Upper lobe of right lung (tissue), 1 donor: ENCODE measurements at regions of chr1 and their contacts with region 1.

Region 1: GRCh38 chr1:89804642-89805237 is 16.1 kb upstream of the LRRC8D start:
- DNase-seq: peak; percentile 73
- ATAC-seq: peak; percentile 97
- H3K4me3 ChIP-seq: no peak overlapping the region
- H3K27ac ChIP-seq: no peak overlapping the region
- H3K4me1 ChIP-seq: no peaks in the 10 kb centered on the region
- H3K27me3 ChIP-seq: no peaks in the 10 kb centered on the region
- CTCF ChIP-seq: peak; percentile 91

Region 2: DNA sequence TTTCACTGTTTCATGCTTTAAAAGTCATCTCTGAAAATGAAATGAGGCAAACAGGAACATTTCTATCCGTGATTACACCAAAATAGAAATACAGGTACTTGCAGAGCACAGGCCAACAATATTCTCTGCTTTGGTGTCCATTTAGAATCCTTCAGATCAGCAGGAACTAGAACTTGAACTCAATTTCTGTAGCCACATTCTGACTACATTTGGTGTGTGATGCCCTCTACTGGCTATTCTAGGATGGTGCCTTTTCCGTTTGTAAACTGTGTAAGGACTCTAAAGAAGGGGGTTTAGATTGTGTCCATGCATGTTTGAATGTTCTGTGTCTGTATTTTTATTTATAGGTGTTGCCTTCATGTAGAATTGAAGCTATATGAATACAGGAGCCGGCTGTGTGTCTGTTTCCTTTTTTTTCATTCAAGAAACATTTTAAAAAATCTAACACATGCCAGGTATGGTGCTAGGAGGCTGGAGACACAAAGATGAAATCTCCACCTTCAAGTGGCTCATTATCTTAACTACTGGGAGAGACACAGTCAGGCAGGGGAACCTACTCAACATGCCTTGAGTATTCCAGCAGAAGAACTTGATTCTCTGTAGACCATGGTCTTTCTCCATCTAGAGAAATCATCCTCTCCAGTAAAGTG is 182.6 kb after region 1 on chr1:
- intact Hi-C with region 1: loop called (anchors 5 kb)
- DNase-seq: no peak
- ATAC-seq: peak; percentile 97
- H3K4me3 ChIP-seq: no peak overlapping the region
- H3K27ac ChIP-seq: no peak overlapping the region
- H3K4me1 ChIP-seq: no peaks in the 10 kb centered on the region
- H3K27me3 ChIP-seq: no peaks in the 10 kb centered on the region
- CTCF ChIP-seq: peak; percentile 92

Region 3: GRCh38 chr1:90187323-90187585 is 382.5 kb after region 1 on chr1:
- intact Hi-C with region 1: no loop called
- DNase-seq: no peak
- ATAC-seq: no peak
- H3K4me3 ChIP-seq: no peak overlapping the region
- H3K27ac ChIP-seq: no peak overlapping the region
- H3K4me1 ChIP-seq: no peaks in the 10 kb centered on the region
- H3K27me3 ChIP-seq: no peaks in the 10 kb centered on the region
- CTCF ChIP-seq: no peak